Activated CD4-positive, alpha-beta T cell treated with anti-CD3 and anti-CD28 coated beads, Interleukin-2, amount 10 ng/mL, durations not matched to agents 24 days and 14 days (primary cell): ENCODE measurements at regions of chr5 and their contacts with region 1.

Region 1: DNA sequence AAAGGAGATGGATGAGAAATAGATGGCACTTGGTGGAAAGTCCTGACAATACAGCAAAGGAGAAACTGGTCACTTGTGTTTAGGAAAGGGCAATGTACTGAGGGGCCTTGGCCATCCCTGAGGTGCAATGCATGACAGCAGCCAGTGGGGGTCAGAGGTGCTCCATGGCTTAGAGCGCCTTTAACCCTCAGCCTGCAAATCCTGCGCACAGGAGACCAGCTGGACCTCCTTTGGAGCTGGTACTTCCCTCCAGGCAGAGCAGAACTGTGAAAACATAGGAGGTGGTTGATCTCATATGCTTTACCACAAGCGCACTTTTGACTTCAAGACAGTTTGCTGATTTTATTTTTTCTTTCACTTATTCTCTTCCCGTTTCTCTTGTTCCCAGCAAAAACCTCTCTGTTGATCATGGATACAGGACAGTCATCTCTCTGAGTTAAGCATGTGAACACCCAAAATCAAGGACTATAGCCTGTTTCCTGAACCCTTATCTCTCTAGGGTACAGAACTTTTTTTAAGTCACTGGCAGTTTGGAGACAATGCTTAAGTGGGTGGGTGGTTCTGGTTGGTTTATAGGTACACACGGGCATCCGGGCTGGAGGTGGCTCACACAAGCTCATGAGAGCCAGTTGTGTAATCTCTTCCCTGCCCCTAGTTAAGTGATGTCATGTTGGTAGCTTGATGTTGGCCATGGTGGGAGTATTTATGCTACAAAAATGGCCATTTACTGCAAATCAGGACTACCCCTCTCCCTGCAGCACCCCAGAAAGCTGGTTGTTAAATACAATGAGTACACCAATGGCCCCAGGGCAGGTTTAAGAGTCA is 37.6 kb upstream of the ANKRD55 start:
- DNase-seq: peak; percentile 92
- H3K4me3 Mint-ChIP-seq: peak overlapping the region; percentile 27
- H3K27ac Mint-ChIP-seq: peak overlapping the region; percentile 20
- H3K4me1 Mint-ChIP-seq: peaks cover 27% of the 10 kb centered on the region
- H3K27me3 Mint-ChIP-seq: no peaks in the 10 kb centered on the region

Region 2: GRCh38 chr5:55936100-55936693 is 334.6 kb before region 1 on chr5:
- intact Hi-C with region 1: loop called (anchors 2 kb)
- DNase-seq: peak; percentile 92
- H3K4me3 Mint-ChIP-seq: no peak overlapping the region
- H3K27ac Mint-ChIP-seq: no peak overlapping the region
- H3K4me1 Mint-ChIP-seq: peaks cover 2% of the 10 kb centered on the region
- H3K27me3 Mint-ChIP-seq: no peaks in the 10 kb centered on the region

Region 3: GRCh38 chr5:56155992-56156584 is 114.7 kb before region 1 on chr5:
- intact Hi-C with region 1: no loop called
- DNase-seq: peak; percentile 66
- H3K4me3 Mint-ChIP-seq: peak overlapping the region; percentile 44
- H3K27ac Mint-ChIP-seq: peak overlapping the region; percentile 92
- H3K4me1 Mint-ChIP-seq: peaks cover 74% of the 10 kb centered on the region
- H3K27me3 Mint-ChIP-seq: no peaks in the 10 kb centered on the region

Region 4: DNA sequence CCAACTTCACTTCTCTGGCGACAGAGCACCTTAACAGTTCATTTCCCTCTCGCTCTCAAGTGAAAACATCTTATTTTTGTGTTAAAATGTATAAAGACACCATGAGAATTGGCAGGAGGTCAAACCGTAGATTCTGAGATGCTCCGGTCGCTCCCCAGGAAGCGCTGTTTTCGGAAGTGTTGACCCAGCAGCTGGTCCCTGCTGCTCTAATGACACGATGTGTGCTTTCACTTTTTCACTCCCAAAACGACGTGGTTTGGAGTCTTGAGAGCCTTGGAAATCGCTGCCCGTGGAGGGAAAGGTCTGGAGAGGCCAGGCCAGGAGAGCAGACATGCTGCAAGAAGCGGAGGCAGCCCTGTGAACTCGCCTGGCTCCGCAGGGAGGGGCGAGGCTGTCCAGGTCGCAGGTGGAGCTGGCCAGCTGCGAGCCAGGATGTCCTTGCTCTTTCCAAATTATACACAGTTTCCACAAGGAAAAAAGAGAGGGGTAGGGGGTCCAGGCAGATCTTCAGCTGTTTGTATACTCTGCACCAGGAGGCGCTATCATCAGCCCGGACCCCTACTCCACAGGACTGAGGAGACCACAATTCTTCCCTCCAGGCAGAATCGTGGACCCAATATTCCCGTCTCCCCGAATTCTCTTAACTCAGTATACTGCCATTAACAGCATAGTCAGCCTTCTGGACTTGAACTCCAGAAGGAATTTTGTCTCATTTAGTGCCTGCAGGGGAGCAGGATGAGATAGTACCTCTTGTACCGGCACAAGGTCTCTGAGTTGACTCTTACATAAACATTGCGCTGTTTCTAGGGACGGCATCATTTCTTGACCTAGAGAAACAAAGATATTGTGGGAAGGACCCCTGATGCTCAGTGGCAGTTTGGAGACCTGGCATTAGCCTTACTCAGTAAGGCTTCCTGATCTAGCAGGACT is 210.9 kb after region 1 on chr5:
- intact Hi-C with region 1: loop called (anchors 1 kb)
- DNase-seq: peak; percentile 78
- H3K4me3 Mint-ChIP-seq: peak overlapping the region; percentile 86
- H3K27ac Mint-ChIP-seq: peak overlapping the region; percentile 91
- H3K4me1 Mint-ChIP-seq: peaks cover 38% of the 10 kb centered on the region
- H3K27me3 Mint-ChIP-seq: no peaks in the 10 kb centered on the region

Region 5: DNA sequence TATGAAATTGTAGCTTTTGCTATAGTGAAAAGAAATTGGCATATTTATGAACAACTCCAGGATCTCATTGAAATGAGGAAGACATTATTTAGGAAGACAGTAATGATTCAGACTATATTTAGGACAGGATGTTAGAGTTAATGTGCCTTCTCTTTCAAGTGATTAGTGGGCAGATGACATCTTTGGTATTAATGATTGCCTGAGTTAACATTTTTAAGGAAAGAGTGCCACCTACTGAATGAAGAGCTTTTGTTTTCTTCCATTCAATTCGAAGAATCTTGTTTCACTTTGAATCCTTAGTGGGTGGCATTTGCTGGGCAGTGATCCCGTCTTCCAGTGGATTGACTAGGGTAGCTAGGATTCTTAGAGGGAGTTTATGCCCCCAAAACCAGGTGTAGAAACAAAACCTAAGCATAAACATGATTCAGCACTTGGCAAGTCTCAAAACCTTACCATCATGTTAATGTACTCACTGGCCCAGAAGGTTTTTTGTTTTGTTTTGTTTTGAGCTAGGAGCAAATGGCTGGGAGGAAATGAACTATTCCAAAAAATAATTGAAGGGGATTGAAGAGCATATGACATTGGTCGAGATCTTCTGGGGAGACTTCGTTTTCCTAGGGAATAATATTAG is 567.7 kb after region 1 on chr5:
- intact Hi-C with region 1: loop called (anchors 1 kb)
- DNase-seq: no peak
- H3K4me3 Mint-ChIP-seq: peak overlapping the region; percentile 52
- H3K27ac Mint-ChIP-seq: peak overlapping the region; percentile 70
- H3K4me1 Mint-ChIP-seq: peaks cover 46% of the 10 kb centered on the region
- H3K27me3 Mint-ChIP-seq: no peaks in the 10 kb centered on the region

Region 6: DNA sequence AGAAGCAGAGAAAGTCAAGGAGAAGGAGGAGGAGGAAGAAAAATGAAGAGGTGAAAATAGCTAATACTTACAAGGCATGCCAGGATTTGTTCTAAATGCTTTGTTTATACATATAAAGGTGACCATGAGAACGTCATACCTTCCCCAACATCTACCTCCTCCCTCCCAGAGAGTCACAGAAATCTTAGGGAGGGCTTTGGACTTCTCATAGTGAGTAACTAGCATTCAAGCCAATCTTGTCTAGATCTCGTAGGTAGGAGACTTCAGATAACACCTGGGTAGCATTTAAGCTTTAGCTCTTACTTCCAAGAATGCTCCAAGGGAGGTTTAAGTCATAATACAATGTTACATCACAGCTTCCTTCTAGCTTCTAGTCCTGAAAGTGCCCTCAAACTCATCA is 866.6 kb after region 1 on chr5:
- intact Hi-C with region 1: loop called (anchors 2 kb)
- DNase-seq: no peak
- H3K4me3 Mint-ChIP-seq: no peak overlapping the region
- H3K27ac Mint-ChIP-seq: no peak overlapping the region
- H3K4me1 Mint-ChIP-seq: no peaks in the 10 kb centered on the region
- H3K27me3 Mint-ChIP-seq: peaks cover 27% of the 10 kb centered on the region